GM13977 (cell line): ENCODE measurements at regions of chr3 and their contacts with region 1.

Region 1: GRCh38 chr3:195727606-195728195 is 6.9 kb downstream of the MUC20 start:
- DNase-seq: no peak
- CTCF ChIP-seq: no peak

Region 2: DNA sequence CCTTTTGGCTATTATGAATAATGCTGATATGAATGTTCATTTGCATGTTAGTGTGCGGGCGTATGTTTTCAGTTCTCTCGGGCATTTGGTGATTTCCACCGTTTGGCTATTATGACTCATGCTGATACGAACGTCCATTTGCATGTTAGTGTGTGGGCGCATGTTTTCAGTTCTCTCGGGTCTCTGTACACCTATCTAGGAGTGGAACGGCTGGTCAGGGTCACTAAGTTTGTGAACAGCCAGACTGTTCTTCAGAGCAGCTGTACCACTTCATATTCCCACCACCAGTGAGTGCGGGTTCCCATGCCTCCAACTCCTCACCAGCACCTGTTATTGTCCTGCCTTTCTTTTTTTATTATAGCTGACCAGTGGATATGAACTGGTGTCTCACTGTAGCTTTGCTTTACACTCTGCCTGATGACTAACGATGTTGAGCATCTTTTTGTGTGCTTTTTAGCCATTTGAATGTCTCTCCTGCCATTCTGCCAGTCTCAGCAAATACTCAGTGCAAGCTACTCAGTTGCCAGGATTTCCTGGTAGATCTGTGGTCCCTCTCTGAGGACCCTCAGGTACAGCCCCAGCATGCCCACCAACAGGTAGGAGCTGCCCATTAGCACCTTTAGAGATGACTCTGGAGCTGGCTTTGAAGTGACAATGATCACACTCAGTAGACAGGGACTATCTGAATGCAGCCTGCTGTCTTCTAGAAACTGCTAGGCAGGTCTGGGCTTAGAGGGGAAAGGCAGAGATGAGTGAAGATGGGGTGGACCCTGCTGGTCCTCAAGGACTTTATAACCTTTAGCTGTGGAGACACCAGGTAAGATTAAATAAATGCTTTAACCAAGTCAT is 597.8 kb before region 1 on chr3:
- in situ Hi-C with region 1: no loop called
- DNase-seq: peak; percentile 81
- CTCF ChIP-seq: no peak

Region 3: DNA sequence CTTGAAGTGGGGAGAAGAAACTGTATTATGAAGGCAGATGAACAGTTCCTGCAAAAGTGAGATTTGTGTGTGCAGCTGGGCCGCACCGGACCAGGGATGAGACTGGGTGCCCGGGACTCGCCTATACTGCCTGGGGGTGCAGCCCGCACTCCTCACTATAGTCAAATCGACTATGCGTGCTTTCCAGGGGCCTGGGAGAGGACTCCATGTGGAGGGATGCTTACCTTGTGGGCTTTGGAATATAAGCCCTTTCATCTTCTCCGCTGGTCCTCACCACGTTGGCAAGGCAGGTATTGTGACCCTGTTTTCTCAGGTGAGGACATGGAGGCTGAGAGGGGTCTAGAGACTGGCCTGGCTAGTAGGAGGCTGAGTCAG is 111.0 kb before region 1 on chr3:
- in situ Hi-C with region 1: loop called (anchors 5 kb)
- DNase-seq: no peak
- CTCF ChIP-seq: no peak

Region 4: GRCh38 chr3:195823998-195824397 is 96.3 kb after region 1 on chr3:
- in situ Hi-C with region 1: no loop called
- DNase-seq: no peak
- CTCF ChIP-seq: no peak